PC-3 (cell line): ENCODE measurements at regions of chr14 and their contacts with region 1.

Region 1: DNA sequence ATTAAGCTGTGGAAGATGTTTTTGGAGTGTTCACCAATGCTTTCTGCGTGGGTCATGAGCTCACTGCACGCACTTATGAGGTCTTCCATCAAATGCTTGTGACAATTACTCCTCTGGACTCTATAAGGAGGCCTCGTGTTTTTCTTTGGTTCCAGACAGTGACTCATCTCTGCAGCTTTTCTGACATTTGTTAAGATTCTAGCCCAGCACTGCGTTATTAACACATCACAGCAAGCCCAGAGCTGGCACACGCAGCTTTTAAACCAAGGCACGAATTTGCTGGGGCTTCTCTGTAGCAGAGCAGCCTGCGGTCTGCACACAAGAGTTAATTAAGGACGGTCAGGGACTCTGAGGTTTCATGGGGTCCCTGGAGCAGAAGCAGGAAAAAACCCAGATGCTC is 16.9 kb downstream of the MEG3 start:
- DNase-seq: no peak
- ATAC-seq: peak; percentile 40; the same call in 1 of the 2 replicates
- H3K4me3 ChIP-seq: no peak overlapping the region
- H3K27ac ChIP-seq: no peak overlapping the region
- H3K4me1 ChIP-seq: no peaks in the 10 kb centered on the region
- H3K27me3 ChIP-seq: no peaks in the 10 kb centered on the region
- CTCF ChIP-seq: no peak

Region 2: GRCh38 chr14:101628471-101628966 is 785.7 kb after region 1 on chr14:
- CTCF ChIA-PET with region 1: interaction called, 13 read pairs
- POLR2A ChIA-PET with region 1: no interaction called
- intact Hi-C with region 1: no loop called
- DNase-seq: peak; percentile 82
- ATAC-seq: peak; percentile 90
- H3K4me3 ChIP-seq: peak overlapping the region; percentile 41; the same call in 1 of the 2 replicates
- H3K27ac ChIP-seq: no peak overlapping the region
- H3K4me1 ChIP-seq: peaks cover 3% of the 10 kb centered on the region; the same call in 1 of the 2 replicates
- H3K27me3 ChIP-seq: no peaks in the 10 kb centered on the region
- CTCF ChIP-seq: peak; percentile 88